Breast epithelium (tissue), 4 donors: ENCODE measurements at regions of chrX and their contacts with region 1.

Region 1: DNA sequence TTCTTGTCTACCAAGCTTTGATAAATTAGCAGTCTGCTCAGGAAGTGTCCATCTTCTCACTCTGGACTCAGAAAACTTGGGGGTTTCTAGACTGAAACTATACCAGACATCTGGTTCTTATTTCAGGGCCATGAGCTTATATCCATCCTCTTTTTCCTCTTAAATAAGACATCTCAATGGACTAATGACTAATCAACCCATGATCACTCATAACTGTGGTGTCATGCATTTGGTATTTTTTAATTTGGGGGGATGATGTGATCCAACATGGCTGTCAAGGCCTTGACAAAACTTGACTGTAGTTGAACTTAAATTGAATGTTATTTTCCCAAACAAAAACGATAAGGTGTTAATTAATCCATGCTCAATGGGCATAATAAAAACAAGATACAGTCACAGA is 87.8 kb downstream of the GPRASP3 start:
- DNase-seq: no peak
- H3K4me3 ChIP-seq: no peak overlapping the region
- H3K27ac ChIP-seq: no peak overlapping the region
- H3K4me1 ChIP-seq: no peaks in the 10 kb centered on the region
- H3K27me3 ChIP-seq: peaks cover 0 to 5% of the 10 kb centered on the region in 2 donors
- CTCF ChIP-seq: no peak
- POLR2A ChIP-seq: no peak

Region 2: GRCh38 chrX:100850317-100850716 is 1958.0 kb before region 1 on chrX:
- intact Hi-C with region 1: loop called (anchors 10 kb)
- DNase-seq: no peak
- H3K4me3 ChIP-seq: no peak overlapping the region
- H3K27ac ChIP-seq: no peak overlapping the region
- H3K4me1 ChIP-seq: no peaks in the 10 kb centered on the region
- H3K27me3 ChIP-seq: peaks cover 0 to 32% of the 10 kb centered on the region in 2 donors
- CTCF ChIP-seq: no peak
- POLR2A ChIP-seq: no peak